ENCODE measurements at regions of chr7 and their contacts with region 1.

Region 1: DNA sequence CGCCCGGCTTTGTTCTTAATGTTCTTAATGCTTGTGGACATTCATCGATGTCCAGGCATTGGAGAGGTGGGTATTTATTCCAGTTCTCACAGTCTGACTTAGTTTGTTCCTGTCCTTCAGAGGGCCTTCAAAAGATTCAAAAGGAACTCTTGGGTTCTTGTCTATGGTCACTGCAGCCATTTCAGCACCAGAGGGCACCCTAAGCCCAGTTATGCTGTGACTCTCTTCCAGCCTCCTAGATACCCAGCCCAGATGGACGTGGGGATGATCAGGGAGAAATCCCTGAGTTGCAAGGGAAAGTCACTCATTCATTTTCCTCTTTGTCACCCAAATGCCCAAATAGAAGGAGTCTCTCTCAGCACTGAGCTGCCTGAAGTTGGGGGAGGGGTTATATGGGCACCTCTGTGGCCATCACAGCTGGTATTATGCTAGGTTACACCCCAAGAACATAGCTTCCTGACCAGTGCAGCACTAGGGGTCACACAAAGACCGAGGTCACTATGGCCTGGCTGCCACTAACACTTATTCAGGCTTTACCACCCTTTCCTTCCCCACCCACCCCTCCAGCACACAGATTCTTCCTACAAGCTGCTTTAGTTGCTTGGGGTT is 26.5 kb upstream of the CCDC126 start:
- DNase-seq: peak; percentile 19 to 68 (median 54)
- ATAC-seq: peak; percentile 83
- H3K4me3 ChIP-seq: no peak overlapping the region
- H3K4me3 Mint-ChIP-seq: no peak overlapping the region
- H3K27ac ChIP-seq: no peak overlapping the region
- H3K27ac Mint-ChIP-seq: no peak overlapping the region
- H3K4me1 ChIP-seq: no peaks in the 10 kb centered on the region
- H3K4me1 Mint-ChIP-seq: peaks cover 0 to 5% (median 0%) of the 10 kb centered on the region in 7 donors
- H3K27me3 ChIP-seq: peaks cover 0 to 3% of the 10 kb centered on the region in 2 donors
- H3K27me3 Mint-ChIP-seq: peaks cover 4 to 24% (median 12%) of the 10 kb centered on the region in 5 donors

Region 2: GRCh38 chr7:23490357-23491135 is 80.2 kb before region 1 on chr7:
- CTCF ChIA-PET with region 1: no interaction called
- POLR2A ChIA-PET with region 1: no interaction called
- intact Hi-C with region 1: no loop called
- DNase-seq: peak; percentile 39 to 73 (median 62)
- ATAC-seq: peak; percentile 97
- H3K4me3 ChIP-seq: peak overlapping the region; percentile 69
- H3K4me3 Mint-ChIP-seq: peak overlapping the region; percentile 81 to 90 (median 85)
- H3K27ac ChIP-seq: peak overlapping the region; percentile 63
- H3K27ac Mint-ChIP-seq: peak overlapping the region; percentile 74 to 92 (median 84)
- H3K4me1 ChIP-seq: peaks cover 4 to 6% of the 10 kb centered on the region in 2 donors
- H3K4me1 Mint-ChIP-seq: peaks cover 3 to 13% (median 10%) of the 10 kb centered on the region in 7 donors
- H3K27me3 ChIP-seq: no peaks in the 10 kb centered on the region
- H3K27me3 Mint-ChIP-seq: no peaks in the 10 kb centered on the region

Region 3: GRCh38 chr7:23546897-23547572 is 23.7 kb before region 1 on chr7:
- CTCF ChIA-PET with region 1: interaction called, 9 read pairs
- POLR2A ChIA-PET with region 1: interaction called, 6 read pairs
- intact Hi-C with region 1: loop called (anchors 1 kb)
- DNase-seq: peak; percentile 37 to 89 (median 82)
- ATAC-seq: peak; percentile 98
- H3K4me3 ChIP-seq: no peak overlapping the region
- H3K4me3 Mint-ChIP-seq: no peak overlapping the region
- H3K27ac ChIP-seq: no peak overlapping the region
- H3K27ac Mint-ChIP-seq: peak overlapping the region in 6 of 9 donors; percentile 22 to 90 (median 40)
- H3K4me1 ChIP-seq: no peaks in the 10 kb centered on the region
- H3K4me1 Mint-ChIP-seq: peaks cover 0 to 14% (median 5%) of the 10 kb centered on the region in 7 donors
- H3K27me3 ChIP-seq: no peaks in the 10 kb centered on the region
- H3K27me3 Mint-ChIP-seq: peaks cover 0 to 5% (median 0%) of the 10 kb centered on the region in 5 donors

Region 4: DNA sequence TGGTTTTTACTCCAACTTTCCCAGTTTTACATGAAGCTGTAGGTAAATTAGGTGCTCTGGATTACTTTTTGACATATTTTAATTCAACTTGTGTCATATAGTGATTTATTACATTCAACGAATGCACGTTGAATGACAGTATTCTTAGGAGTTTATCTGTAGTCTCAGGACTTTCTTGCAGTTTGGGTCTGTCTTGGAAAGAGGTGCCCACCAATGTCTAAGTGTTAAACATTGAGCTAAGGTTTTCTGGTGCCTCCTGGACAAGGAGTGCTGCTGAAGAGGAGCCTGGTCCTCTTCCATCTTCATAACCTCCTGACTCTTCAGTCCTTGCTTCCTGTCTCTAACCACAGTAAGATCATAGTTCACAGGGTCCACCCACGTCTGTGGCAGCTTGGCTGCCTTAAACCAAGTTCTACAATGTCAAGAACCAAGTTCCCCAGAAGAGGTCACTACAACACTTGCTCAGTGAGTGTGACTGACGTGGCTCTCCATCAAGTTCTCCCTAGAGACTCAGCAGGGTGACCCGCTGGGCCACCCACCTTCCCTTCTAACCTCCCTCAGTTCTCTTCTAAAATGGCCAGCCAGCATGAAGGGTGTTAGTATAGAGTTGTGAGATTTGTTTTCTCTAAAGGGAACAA is 719.4 kb after region 1 on chr7:
- CTCF ChIA-PET with region 1: no interaction called
- POLR2A ChIA-PET with region 1: no interaction called
- intact Hi-C with region 1: loop called in 1 of 2 experiments (anchors 1 kb)
- DNase-seq: peak in 8 of 9 donors; percentile 17 to 51 (median 40)
- ATAC-seq: peak; percentile 83
- H3K4me3 ChIP-seq: no peak overlapping the region
- H3K4me3 Mint-ChIP-seq: no peak overlapping the region
- H3K27ac ChIP-seq: no peak overlapping the region
- H3K27ac Mint-ChIP-seq: no peak overlapping the region
- H3K4me1 ChIP-seq: peaks cover 0 to 5% of the 10 kb centered on the region in 2 donors
- H3K4me1 Mint-ChIP-seq: peaks cover 6 to 19% (median 12%) of the 10 kb centered on the region in 7 donors
- H3K27me3 ChIP-seq: peaks cover 0 to 16% of the 10 kb centered on the region in 2 donors
- H3K27me3 Mint-ChIP-seq: peaks cover 48 to 56% (median 50%) of the 10 kb centered on the region in 5 donors

Region 5: DNA sequence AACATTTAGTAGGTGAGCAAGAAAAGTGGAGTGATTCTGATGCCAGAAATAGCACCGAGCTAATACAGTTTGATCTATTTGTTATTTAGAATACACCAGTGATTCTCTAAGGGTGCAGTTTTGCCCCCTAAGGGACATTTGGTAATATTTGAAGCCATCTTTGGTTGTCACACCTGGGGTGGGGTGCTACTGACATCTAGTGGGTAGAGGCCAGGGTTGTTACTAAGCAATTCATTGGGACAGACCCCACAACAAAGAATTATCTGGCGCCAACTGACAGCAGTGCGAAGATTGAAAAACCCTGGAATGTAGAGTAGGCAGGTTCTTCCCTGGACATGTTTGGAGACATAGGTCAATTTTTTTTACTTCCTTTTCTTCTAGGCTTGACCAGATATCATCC is 1017.2 kb after region 1 on chr7:
- CTCF ChIA-PET with region 1: no interaction called
- POLR2A ChIA-PET with region 1: no interaction called
- intact Hi-C with region 1: loop called in 1 of 2 experiments (anchors 1 kb)
- DNase-seq: peak in 8 of 9 donors; percentile 21 to 70 (median 63)
- ATAC-seq: peak; percentile 88
- H3K4me3 ChIP-seq: no peak overlapping the region
- H3K4me3 Mint-ChIP-seq: no peak overlapping the region
- H3K27ac ChIP-seq: no peak overlapping the region
- H3K27ac Mint-ChIP-seq: peak overlapping the region in 2 of 9 donors; percentile 0 to 26
- H3K4me1 ChIP-seq: no peaks in the 10 kb centered on the region
- H3K4me1 Mint-ChIP-seq: peaks cover 7 to 40% (median 27%) of the 10 kb centered on the region in 7 donors
- H3K27me3 ChIP-seq: no peaks in the 10 kb centered on the region
- H3K27me3 Mint-ChIP-seq: no peaks in the 10 kb centered on the region

Region 6: DNA sequence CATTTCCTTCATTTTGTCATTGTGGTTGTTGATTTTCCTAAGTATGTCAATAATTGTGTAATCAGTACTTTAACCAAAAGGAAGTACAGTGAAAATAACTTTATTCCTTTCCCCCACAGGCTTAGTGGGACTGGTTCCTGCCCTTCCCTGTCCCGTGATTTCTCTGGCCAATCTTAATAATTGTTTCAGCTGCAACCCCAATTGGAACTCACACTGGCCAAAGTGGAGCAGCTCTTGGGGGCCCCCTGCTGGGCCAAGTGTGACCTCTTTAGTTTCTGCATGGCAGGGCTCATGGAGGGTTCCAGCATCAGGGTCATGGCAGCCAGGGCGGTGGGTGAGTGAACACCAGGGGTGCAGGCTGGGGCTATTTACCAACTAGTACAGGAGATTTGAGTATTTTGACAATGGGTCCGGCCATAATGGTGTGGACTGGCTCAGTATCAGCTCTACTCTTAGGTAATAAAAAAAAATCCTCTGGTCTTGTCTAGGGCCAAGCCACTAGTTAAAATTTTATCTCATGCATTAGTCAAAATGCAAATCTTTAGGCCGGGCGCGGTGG is 1522.7 kb after region 1 on chr7:
- CTCF ChIA-PET with region 1: interaction called, 3 read pairs
- POLR2A ChIA-PET with region 1: no interaction called
- intact Hi-C with region 1: loop called (anchors 1 to 10 kb)
- DNase-seq: peak; percentile 33 to 80 (median 60)
- ATAC-seq: peak; percentile 90
- H3K4me3 ChIP-seq: no peak overlapping the region
- H3K4me3 Mint-ChIP-seq: no peak overlapping the region
- H3K27ac ChIP-seq: no peak overlapping the region
- H3K27ac Mint-ChIP-seq: no peak overlapping the region
- H3K4me1 ChIP-seq: no peaks in the 10 kb centered on the region
- H3K4me1 Mint-ChIP-seq: peaks cover 0 to 15% (median 8%) of the 10 kb centered on the region in 7 donors
- H3K27me3 ChIP-seq: no peaks in the 10 kb centered on the region
- H3K27me3 Mint-ChIP-seq: peaks cover 0 to 14% (median 0%) of the 10 kb centered on the region in 5 donors

Measured in naive thymus-derived CD4-positive, alpha-beta T cell (primary cell).